Right ventricle myocardium superior (tissue), 1 donor: ENCODE measurements at regions of chr10 and their contacts with region 1.

Region 1: DNA sequence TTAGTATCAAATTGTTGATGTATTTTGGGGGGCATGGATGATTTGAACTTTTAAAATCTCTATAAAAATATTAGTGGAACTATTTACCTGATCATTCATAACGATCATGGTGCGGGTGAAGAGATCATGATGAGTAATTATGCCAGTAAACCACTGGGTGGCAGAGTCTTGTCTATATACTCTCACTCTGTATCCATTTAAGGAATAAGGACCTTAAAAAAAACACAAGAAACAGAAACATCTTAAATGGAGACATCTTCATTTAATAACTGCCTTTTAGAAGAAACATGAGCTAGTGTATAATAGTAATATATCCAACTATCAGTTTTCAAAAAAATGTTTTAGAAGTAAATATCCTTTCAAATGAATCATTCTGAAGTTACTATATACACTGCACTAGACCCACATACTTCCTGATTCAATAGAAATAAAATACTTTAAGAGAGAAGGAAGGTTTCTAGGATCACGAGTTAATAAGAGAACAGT is 84.0 kb downstream of the NRBF2 start:
- DNase-seq: no peak
- ATAC-seq: peak; percentile 89

Region 2: DNA sequence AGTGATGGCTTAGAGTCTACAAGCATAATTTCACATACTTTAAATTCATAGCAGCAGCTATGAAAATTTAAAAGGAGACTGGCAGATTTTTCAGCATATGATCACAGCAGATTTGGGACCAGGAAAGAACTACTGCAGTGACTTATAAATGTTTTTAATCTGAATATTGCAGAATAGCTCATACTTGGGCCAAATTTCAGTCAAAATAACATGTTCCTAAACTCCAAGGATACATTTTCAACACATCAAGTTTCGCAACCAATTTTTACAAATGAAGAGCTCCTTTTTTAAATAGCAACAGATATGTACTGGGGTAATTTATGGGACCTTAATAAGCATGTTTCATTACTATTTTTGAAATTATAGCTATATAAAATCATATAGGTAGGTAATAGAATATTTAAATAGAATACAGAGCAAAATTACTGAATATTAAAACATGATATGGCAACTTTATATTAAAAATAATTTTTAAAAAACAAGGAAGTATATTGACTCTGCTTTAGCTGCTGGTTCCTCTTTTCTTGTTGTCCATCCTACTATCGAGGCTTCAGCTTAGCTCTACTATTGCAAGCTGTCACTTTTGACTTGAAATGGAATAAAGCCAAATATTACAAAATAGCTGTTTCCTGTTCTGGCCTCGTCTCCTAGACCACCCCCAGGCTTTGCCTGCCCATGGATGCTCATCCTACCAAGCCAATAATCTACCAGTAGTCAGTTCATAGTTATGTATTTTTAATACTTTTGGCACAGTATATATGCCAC is 39.0 kb after region 1 on chr10:
- intact Hi-C with region 1: loop called (anchors 5 kb)
- DNase-seq: no peak
- ATAC-seq: peak; percentile 78